A549 (cell line): ENCODE measurements at regions of chr7 and their contacts with region 1.

Region 1: DNA sequence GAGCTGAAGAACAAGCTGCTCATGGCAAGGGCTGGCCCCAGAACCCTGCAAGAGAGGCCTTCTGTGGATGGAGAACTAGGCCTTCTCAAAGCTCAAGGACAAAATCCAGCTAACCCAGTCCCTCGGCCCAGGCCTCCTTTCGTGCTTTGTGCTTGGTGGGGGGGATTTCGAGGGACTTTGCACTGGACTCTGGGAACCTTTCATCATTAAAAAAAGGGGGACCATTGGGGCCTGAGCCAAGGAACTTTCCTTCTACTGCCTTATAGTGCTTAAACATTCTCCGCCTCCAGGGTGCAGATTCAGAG is 23.5 kb downstream of the NOBOX start:
- DNase-seq: no peak
- ATAC-seq: no peak
- H3K4me3 ChIP-seq: no peak overlapping the region
- H3K27ac ChIP-seq: no peak overlapping the region
- H3K4me1 ChIP-seq: peaks cover 17% of the 10 kb centered on the region
- CTCF ChIP-seq: no peak
- EP300 ChIP-seq: no peak
- POLR2A ChIP-seq: no peak
- RAD21 ChIP-seq: no peak

Region 2: DNA sequence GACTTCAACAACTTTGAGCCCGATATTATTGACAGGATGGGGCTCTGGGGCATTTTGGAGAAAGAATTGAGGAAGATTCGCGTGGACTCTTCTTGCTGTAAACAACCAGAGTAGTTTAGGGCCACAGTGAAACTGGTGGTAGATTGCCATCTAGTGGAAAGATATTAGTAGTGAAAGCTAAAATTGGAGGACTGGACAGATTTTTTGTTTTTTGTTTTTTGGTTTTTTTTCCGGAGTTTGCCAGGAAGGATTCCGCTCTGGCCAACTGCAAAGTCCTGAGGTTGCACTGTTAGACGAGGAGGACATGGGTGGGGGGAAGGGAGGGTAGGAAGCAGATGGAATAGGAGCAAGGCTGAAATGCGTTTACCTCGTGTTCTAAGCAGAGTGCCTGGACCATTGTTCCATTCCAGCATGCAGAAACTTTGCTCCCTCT is 11.8 kb after region 1 on chr7:
- CTCF ChIA-PET with region 1: interaction called, 14 read pairs
- POLR2A ChIA-PET with region 1: no interaction called
- DNase-seq: peak; percentile 48 to 52
- ATAC-seq: peak; percentile 84 to 91
- H3K4me3 ChIP-seq: no peak overlapping the region
- H3K27ac ChIP-seq: no peak overlapping the region
- H3K4me1 ChIP-seq: peaks cover 3% of the 10 kb centered on the region; the same call in 1 of the 3 replicates
- CTCF ChIP-seq: peak; percentile 84
- EP300 ChIP-seq: no peak
- POLR2A ChIP-seq: no peak
- RAD21 ChIP-seq: peak; percentile 90 to 91

Region 3: GRCh38 chr7:144454256-144455039 is 74.4 kb after region 1 on chr7:
- CTCF ChIA-PET with region 1: no interaction called
- POLR2A ChIA-PET with region 1: no interaction called
- DNase-seq: peak in 1 of 2 experiments; percentile 5
- ATAC-seq: no peak
- H3K4me3 ChIP-seq: no peak overlapping the region
- H3K27ac ChIP-seq: no peak overlapping the region
- H3K4me1 ChIP-seq: no peaks in the 10 kb centered on the region
- CTCF ChIP-seq: no peak
- EP300 ChIP-seq: no peak
- POLR2A ChIP-seq: no peak
- RAD21 ChIP-seq: peak in 1 of 2 experiments; percentile 27; a peak in 1 of 5 replicates

Region 4: DNA sequence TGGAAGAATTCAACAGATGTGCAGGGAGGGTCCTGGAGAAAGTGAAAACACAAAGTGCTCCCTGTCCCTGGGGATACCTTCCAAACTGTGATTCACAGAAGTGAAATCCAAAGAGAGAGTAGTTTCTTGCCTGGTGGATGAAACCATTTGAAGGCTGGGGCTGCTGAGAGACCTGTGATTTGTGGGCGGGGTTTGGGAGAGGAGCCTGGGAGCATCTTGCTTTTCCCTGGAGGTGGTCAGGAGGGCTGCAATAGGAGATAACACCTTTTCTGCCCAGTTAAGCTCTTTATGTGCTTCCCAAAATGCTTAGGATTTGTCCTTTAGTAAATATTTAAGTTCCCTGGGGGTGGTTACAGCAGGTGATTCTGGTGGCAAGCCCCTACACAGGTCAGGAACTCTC is 561.1 kb after region 1 on chr7:
- CTCF ChIA-PET with region 1: no interaction called
- POLR2A ChIA-PET with region 1: no interaction called
- DNase-seq: no peak
- ATAC-seq: no peak
- H3K4me3 ChIP-seq: no peak overlapping the region
- H3K27ac ChIP-seq: no peak overlapping the region
- H3K4me1 ChIP-seq: no peaks in the 10 kb centered on the region
- CTCF ChIP-seq: no peak
- EP300 ChIP-seq: no peak
- POLR2A ChIP-seq: no peak
- RAD21 ChIP-seq: no peak